CD8-positive, alpha-beta T cell (primary cell): ENCODE measurements at regions of chr7 and their contacts with region 1.

Region 1: DNA sequence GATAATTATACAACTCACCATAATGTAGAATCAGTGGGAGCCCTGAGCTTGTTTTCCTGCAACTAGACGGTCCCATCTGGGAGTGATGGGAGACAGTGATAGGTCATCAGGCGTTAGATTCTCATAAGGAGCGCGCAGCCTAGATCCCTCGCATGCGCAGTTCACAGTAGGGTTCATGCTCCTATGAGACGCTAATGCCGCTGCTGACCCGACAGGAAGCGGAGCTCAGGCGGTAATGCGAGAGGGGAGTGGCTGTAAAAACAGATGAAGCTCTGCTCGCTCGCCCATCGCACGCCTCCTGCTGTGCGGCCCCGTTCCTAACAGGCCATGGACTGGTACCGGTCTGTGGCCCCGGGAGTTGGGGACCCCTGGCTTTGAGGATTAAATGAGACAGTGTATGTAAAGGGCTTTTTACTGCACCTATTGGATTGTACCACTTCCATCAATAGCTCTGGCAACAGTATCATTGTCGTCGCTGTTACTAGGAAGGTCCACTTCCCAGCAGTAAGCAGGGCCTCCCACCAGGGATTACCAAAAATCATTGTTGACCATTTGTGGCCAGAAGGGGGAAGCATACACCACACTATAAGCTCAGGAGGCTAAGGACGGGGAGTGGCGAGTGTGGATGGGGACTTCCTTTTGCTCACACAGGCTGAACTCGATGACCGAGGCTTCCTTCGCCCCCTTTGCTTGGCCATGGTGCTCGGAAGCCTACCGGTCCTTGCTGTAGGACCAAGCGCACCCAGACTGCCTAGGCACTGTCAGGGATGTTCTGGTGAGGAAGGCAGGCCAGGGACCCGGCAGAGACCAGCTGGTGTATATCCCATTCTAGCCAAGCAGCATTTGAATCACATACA is 26.4 kb downstream of the AKR1B1 start:
- DNase-seq: peak; percentile 32 to 89 (median 71)
- ATAC-seq: peak; percentile 88
- H3K4me3 ChIP-seq: peak overlapping the region; percentile 24 to 37
- H3K4me3 Mint-ChIP-seq: peak overlapping the region; percentile 78
- H3K27ac ChIP-seq: peak overlapping the region; percentile 11 to 69
- H3K27ac Mint-ChIP-seq: peak overlapping the region; percentile 77
- H3K4me1 ChIP-seq: peaks cover 4% of the 10 kb centered on the region
- H3K4me1 Mint-ChIP-seq: peaks cover 16% of the 10 kb centered on the region
- H3K27me3 ChIP-seq: no peaks in the 10 kb centered on the region
- H3K27me3 Mint-ChIP-seq: no peaks in the 10 kb centered on the region
- CTCF ChIP-seq: peak; percentile 52

Region 2: DNA sequence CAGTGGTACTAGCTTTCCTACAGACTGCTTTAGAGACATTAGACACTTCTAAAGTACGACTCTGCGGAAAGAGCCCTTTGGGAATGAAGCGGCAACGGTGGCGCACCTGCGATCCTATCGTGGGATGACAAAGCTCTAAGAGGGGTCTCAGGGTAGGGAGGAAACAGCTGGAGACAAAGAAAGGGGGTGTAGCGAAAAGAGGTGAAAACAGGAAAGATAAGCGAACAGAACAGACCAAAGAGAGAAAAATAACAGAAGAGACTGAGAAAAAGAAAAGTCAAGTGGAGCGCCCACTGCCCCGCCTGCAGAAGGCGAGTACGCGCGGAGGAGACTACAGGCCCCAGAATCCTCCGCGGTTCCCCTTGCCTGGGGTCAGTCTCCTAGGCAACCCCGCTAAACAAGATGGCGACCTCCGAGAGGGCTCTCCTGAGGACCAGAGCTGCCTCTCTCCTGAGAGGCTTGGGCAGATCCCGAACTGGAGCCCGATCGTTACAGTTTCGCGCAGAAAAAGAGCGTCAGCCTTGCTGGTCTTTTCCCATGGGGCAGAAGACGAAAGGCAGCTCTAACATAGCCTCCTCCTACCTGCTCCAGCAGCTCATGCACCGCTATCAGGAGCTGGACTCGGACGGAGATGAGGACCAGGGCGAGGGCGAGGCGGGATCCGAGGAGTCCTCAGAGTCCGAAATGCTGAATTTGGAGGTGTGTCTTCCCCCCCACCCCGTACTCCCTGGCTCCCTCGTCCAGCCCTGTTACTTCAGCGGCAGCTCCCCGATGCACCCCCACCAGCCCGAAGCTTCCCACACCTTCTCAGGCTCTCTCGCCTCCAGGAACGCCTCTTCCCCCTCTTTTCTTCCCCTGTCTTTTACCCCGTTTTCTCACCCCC is 305.3 kb before region 1 on chr7 and contains the start of gene LRGUK:
- CTCF ChIA-PET with region 1: no interaction called
- POLR2A ChIA-PET with region 1: no interaction called
- intact Hi-C with region 1: loop called in 1 of 2 experiments (anchors 5 kb)
- DNase-seq: peak; percentile 59 to 88 (median 79)
- ATAC-seq: peak; percentile 100
- H3K4me3 ChIP-seq: peak within 1 kb of the TSS; percentile 61 to 76
- H3K4me3 Mint-ChIP-seq: peak within 1 kb of the TSS; percentile 85
- H3K27ac ChIP-seq: no peak within 1 kb of the TSS
- H3K27ac Mint-ChIP-seq: no peak within 1 kb of the TSS
- H3K4me1 ChIP-seq: peaks cover 10% of the 10 kb centered on the region
- H3K4me1 Mint-ChIP-seq: peaks cover 15% of the 10 kb centered on the region
- H3K27me3 ChIP-seq: peaks cover 0 to 4% of the 10 kb centered on the region in 2 experiments
- H3K27me3 Mint-ChIP-seq: peaks cover 18% of the 10 kb centered on the region
- CTCF ChIP-seq: no peak
- total RNA-seq, gene LRGUK: 0.42 to 0.71 TPM

Region 3: GRCh38 chr7:134448700-134449229 is 16.2 kb after region 1 on chr7:
- CTCF ChIA-PET with region 1: interaction called, 14 read pairs
- POLR2A ChIA-PET with region 1: interaction called, 6 read pairs
- intact Hi-C with region 1: no loop called
- DNase-seq: no peak
- ATAC-seq: no peak
- H3K4me3 ChIP-seq: no peak overlapping the region
- H3K4me3 Mint-ChIP-seq: no peak overlapping the region
- H3K27ac ChIP-seq: no peak overlapping the region
- H3K27ac Mint-ChIP-seq: no peak overlapping the region
- H3K4me1 ChIP-seq: peaks cover 2% of the 10 kb centered on the region
- H3K4me1 Mint-ChIP-seq: peaks cover 11% of the 10 kb centered on the region
- H3K27me3 ChIP-seq: no peaks in the 10 kb centered on the region
- H3K27me3 Mint-ChIP-seq: no peaks in the 10 kb centered on the region
- CTCF ChIP-seq: no peak

Region 4: DNA sequence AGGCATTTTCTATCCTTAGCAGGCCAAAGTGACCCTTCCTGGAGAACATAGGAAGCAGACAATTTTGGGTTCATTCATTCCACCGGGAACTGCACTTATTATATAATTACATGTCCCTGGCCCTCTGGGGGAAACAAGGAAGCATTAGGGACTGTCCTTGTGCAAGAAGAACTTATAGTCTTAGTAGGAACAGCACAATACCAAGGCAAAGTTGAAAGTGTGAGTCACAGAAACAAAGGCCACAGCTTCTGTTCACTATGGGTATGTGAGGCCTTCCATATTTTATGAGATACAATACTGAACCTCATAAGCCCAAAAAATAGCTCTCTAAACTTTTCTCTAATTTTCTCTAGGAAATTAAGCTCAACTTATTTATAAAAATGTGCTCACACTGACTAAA is 76.5 kb after region 1 on chr7:
- CTCF ChIA-PET with region 1: interaction called, 39 read pairs
- POLR2A ChIA-PET with region 1: interaction called, 4 read pairs
- intact Hi-C with region 1: loop called (anchors 1 kb)
- DNase-seq: no peak
- ATAC-seq: no peak
- H3K4me3 ChIP-seq: no peak overlapping the region
- H3K4me3 Mint-ChIP-seq: no peak overlapping the region
- H3K27ac ChIP-seq: no peak overlapping the region
- H3K27ac Mint-ChIP-seq: no peak overlapping the region
- H3K4me1 ChIP-seq: no peaks in the 10 kb centered on the region
- H3K4me1 Mint-ChIP-seq: no peaks in the 10 kb centered on the region
- H3K27me3 ChIP-seq: no peaks in the 10 kb centered on the region
- H3K27me3 Mint-ChIP-seq: no peaks in the 10 kb centered on the region
- CTCF ChIP-seq: no peak

Region 5: GRCh38 chr7:134547397-134548054 is 115.0 kb after region 1 on chr7:
- CTCF ChIA-PET with region 1: interaction called, 54 read pairs
- POLR2A ChIA-PET with region 1: interaction called, 3 read pairs
- intact Hi-C with region 1: loop called in 1 of 2 experiments (anchors 1 kb)
- DNase-seq: peak; percentile 28 to 79 (median 68)
- ATAC-seq: peak; percentile 51
- H3K4me3 ChIP-seq: no peak overlapping the region
- H3K4me3 Mint-ChIP-seq: no peak overlapping the region
- H3K27ac ChIP-seq: no peak overlapping the region
- H3K27ac Mint-ChIP-seq: no peak overlapping the region
- H3K4me1 ChIP-seq: no peaks in the 10 kb centered on the region
- H3K4me1 Mint-ChIP-seq: peaks cover 3% of the 10 kb centered on the region
- H3K27me3 ChIP-seq: peaks cover 0 to 4% of the 10 kb centered on the region in 2 experiments
- H3K27me3 Mint-ChIP-seq: peaks cover 10% of the 10 kb centered on the region
- CTCF ChIP-seq: peak; percentile 59

Region 6: GRCh38 chr7:134954197-134955082 is 521.9 kb after region 1 on chr7:
- CTCF ChIA-PET with region 1: interaction called, 3 read pairs
- POLR2A ChIA-PET with region 1: no interaction called
- intact Hi-C with region 1: loop called (anchors 1 to 10 kb)
- DNase-seq: peak in 2 of 9 experiments; percentile 43 to 64
- ATAC-seq: no peak
- H3K4me3 ChIP-seq: no peak overlapping the region
- H3K4me3 Mint-ChIP-seq: no peak overlapping the region
- H3K27ac ChIP-seq: no peak overlapping the region
- H3K27ac Mint-ChIP-seq: no peak overlapping the region
- H3K4me1 ChIP-seq: no peaks in the 10 kb centered on the region
- H3K4me1 Mint-ChIP-seq: no peaks in the 10 kb centered on the region
- H3K27me3 ChIP-seq: no peaks in the 10 kb centered on the region
- H3K27me3 Mint-ChIP-seq: peaks cover 2% of the 10 kb centered on the region
- CTCF ChIP-seq: peak; percentile 74